ENCODE measurements at regions of chr13 and their contacts with region 1.

Region 1: DNA sequence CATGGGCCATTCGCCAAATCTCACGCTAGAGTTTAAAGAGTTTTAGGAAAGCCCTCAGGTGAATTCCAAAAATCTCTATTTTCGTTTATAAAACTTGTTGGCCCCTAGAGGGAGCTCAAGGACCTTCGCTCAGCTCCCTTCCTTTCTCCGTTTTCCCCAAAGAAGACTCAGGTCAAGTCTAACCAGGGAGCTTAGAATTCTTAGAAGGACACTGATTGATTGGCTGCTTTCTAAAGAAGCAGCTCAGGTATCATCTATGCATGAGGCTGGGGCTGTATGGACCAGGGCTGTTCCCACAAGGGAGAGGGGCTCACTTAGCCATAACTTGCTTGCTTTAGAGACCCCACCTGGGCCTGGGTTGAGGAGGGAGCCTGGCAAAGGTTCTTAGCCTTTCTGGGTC is 20.5 kb downstream of the DZIP1 start:
- DNase-seq: no peak
- ATAC-seq: peak in 2 of 4 donors; percentile 34 to 41
- H3K4me3 ChIP-seq: no peak overlapping the region
- H3K27ac ChIP-seq: no peak overlapping the region
- H3K4me1 ChIP-seq: peaks cover 0 to 9% (median 0%) of the 10 kb centered on the region in 12 donors
- H3K27me3 ChIP-seq: no peaks in the 10 kb centered on the region
- CTCF ChIP-seq: peak; percentile 44 to 75 (median 64)
- POLR2A ChIP-seq: no peak

Region 2: DNA sequence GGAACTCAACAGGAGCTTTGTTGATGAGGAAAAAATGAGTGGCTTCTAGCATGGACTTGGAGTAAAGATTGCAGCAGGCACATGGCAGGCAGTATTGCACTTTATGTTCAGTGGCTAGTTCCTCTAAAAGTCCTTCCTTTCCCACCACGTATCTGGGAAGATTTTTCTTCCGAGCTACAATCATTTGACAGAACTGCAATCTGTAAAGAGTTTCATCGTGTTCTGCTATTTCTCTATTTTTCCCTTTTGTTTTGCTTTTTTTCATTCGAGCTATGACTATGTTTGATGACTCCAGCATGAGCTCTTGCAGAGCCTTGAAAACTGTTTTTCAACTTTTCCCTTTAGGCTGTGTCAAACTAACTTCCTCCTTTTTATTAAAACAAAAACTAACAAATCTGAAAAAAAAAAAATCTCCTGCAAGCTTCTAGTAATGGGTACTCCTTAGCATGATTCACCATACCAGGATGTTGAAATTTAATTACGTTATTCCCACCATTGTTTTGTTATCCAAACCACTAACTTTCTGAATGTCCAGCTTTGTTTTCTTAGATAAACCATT is 59.2 kb before region 1 on chr13:
- intact Hi-C with region 1: no loop called
- DNase-seq: no peak
- ATAC-seq: no peak
- H3K4me3 ChIP-seq: no peak overlapping the region
- H3K27ac ChIP-seq: peak overlapping the region in 1 of 12 donors; percentile 29
- H3K4me1 ChIP-seq: peaks cover 0 to 6% (median 0%) of the 10 kb centered on the region in 12 donors
- H3K27me3 ChIP-seq: peaks cover 0 to under 1% (median 0%) of the 10 kb centered on the region in 9 donors
- CTCF ChIP-seq: no peak
- POLR2A ChIP-seq: no peak

Region 3: DNA sequence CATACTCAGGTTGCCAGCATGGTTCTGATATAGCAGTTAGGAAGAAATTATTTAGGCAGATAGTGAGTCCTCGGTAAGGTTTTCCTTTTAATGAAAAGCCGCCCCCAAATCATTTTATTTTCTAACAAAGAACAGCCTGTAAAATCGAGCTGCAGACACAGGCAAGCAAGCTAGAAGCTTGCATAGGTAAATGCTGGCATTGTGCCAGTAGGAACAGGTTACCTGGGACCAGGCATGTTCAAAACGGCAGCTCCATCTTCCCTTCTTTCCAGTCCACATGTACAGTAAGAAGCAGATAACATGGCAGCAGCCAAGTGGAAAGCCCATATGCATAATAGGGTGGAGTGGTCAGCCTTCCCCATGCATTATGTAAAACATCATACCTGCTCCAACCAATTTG is 358.1 kb after region 1 on chr13:
- intact Hi-C with region 1: loop called in 2 of 10 experiments (anchors 5 to 10 kb)
- DNase-seq: no peak
- ATAC-seq: no peak
- H3K4me3 ChIP-seq: no peak overlapping the region
- H3K27ac ChIP-seq: no peak overlapping the region
- H3K4me1 ChIP-seq: no peaks in the 10 kb centered on the region
- H3K27me3 ChIP-seq: no peaks in the 10 kb centered on the region
- CTCF ChIP-seq: no peak
- POLR2A ChIP-seq: no peak

Measured in heart left ventricle (tissue), 16 donors.